ENCODE measurements at regions of chr5 and their contacts with region 1.

Region 1: DNA sequence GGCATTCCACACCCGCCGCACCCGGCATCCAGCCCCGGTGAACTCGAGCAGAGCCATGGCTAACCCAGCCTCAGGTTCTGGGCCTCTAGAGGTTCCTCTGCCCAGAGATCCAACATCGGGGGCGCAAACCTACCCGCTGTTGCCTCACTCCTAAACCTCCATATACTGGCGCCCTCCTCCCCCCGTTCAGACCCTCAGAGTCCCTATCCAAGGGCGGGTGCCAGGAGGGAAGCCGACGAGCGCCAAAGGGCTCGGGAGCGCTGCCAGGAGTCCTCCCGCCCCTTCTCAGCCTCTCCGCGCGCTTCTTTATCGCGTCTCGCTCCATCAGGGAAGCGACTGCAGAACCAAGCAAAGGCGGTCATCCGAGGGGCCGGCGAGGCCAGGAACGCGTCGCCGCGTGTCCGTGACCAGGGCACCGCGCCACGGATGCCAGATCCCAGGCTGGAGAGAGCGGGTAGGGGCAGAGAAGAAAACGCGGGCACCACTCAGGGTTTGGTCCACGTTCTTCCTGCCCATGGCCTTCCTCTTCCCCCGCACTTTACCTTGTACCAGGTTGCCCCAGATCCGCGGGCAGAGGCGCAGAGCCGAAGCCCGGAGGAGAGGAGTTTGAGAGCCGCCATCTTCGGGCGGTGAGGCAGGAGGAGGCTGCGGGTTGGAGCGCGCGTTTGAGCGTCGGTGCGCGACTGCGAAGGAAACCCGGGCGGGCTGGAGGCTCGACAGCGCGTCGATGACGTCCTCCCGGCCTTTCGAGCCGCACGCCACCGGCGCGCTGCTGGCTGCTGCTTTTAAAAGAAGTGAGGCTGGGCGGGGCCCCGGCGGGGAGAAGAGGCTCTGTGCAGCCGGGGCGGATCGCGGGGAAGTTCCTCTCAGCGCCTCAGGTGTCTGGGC is at the start of gene OXCT1:
- DNase-seq: peak; percentile 48
- H3K4me3 ChIP-seq: peak within 1 kb of the TSS; percentile 67 to 83 (median 80)
- H3K27ac ChIP-seq: peak within 1 kb of the TSS; percentile 91 to 96 (median 95)
- H3K4me1 ChIP-seq: peaks cover 15 to 65% (median 17%) of the 10 kb centered on the region in 3 donors
- H3K27me3 ChIP-seq: no peaks in the 10 kb centered on the region
- CTCF ChIP-seq: no peak
- POLR2A ChIP-seq: peak in 3 of 4 donors; percentile 78 to 93 (median 91)
- total RNA-seq, gene OXCT1: 20.3 to 27.3 (median 23.4) TPM

Region 2: GRCh38 chr5:41754857-41755256 is 115.1 kb before region 1 on chr5:
- intact Hi-C with region 1: no loop called
- DNase-seq: no peak
- H3K4me3 ChIP-seq: no peak overlapping the region
- H3K27ac ChIP-seq: no peak overlapping the region
- H3K4me1 ChIP-seq: no peaks in the 10 kb centered on the region
- H3K27me3 ChIP-seq: no peaks in the 10 kb centered on the region
- CTCF ChIP-seq: no peak
- POLR2A ChIP-seq: no peak

Region 3: DNA sequence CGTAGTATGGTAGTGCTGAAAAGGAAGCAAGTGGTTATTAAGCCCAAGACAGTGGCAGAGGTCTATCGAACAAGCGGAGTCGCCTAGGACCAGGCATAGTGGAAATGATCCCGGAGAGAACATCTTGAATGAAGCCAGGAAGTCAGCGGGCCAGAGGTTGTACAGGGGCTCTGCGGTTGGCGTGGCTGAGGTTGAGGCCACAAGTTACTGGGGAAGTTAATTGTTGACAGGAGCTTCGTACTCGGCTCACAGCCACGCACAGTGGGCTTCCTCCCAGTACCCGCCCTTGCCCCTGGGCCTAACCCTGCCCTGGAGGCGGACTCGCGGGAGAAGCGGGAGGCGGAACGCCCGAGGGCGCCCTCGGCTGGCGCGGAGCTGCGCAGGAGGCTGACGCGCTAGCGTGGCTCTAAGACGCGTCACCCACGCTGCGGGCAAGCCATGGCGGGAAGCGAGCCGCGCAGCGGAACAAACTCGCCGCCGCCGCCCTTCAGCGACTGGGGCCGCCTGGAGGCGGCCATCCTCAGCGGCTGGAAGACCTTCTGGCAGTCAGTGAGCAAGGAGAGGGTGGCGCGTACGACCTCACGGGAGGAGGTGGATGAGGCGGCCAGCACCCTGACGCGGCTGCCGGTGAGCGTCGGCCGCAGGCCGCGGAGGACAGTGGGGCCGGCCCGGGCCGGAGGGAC is 55.0 kb after region 1 on chr5 and contains the start of gene FBXO4:
- intact Hi-C with region 1: loop called (anchors 10 kb)
- DNase-seq: peak; percentile 12
- H3K4me3 ChIP-seq: peak within 1 kb of the TSS; percentile 62 to 88 (median 72)
- H3K27ac ChIP-seq: peak within 1 kb of the TSS; percentile 92 to 96 (median 94)
- H3K4me1 ChIP-seq: peaks cover 5 to 32% (median 11%) of the 10 kb centered on the region in 3 donors
- H3K27me3 ChIP-seq: no peaks in the 10 kb centered on the region
- CTCF ChIP-seq: peak in 4 of 6 experiments; percentile 30 to 39 (median 36)
- POLR2A ChIP-seq: peak in 2 of 4 donors; percentile 69 to 70
- total RNA-seq, gene FBXO4: 2.4 to 10.9 (median 7.4) TPM

Measured in esophagus squamous epithelium (tissue), 5 donors.